HEK293 (cell line): ENCODE measurements at regions of chr16 and their contacts with region 1.

Region 1: DNA sequence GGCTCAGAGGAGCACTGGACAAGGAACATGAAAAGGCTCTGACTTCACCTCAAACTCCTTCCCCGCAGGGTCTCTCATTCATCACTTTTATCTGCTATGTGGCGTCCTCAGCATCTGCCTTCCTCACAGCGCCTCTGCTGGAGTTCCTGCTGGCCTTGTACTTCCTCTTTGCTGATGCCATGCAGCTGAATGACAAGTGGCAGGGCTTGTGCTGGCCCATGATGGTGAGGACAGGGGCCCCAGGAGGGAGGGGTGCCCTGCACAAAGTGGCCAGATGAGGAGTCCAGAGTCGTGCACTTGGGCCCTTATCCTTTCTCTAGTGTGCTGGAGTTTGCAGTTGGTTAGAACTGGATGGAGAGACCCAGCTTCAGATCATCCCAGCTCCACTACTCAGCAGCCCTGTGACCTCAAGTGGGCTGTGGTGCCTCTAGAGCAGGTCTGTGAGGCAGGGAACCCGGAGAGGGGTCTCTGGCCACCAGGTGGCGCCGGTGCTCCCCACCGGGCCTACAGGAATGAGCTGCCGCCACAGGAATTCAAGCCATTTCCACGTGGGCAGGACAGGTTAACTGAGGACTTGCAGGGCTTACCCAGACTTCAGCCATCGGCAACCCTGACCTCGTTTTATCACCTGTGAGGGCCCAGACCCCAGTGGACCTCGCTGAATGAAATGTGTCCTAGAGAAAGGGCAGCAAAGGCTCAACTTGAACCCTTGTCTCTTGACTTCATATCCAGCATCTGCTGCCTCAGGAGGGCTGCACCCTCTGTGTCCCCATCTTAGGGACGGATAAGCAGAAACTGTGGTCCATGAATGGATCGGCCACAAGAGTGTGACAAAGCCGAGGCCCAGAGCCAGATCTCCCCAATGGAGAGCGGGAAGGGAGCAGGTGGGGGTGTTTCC is 4.0 kb downstream of the CMTM3 start:
- H3K4me3 ChIP-seq: no peak overlapping the region
- H3K27ac ChIP-seq: no peak overlapping the region
- H3K4me1 ChIP-seq: no peaks in the 10 kb centered on the region
- CTCF ChIP-seq: peak; percentile 93

Region 2: GRCh38 chr16:66416939-66417700 is 191.4 kb before region 1 on chr16:
- CTCF ChIA-PET with region 1: no interaction called
- POLR2A ChIA-PET with region 1: no interaction called
- H3K4me3 ChIP-seq: no peak overlapping the region
- H3K27ac ChIP-seq: no peak overlapping the region
- H3K4me1 ChIP-seq: no peaks in the 10 kb centered on the region
- CTCF ChIP-seq: no peak

Region 3: GRCh38 chr16:66562407-66562806 is 46.1 kb before region 1 on chr16:
- CTCF ChIA-PET with region 1: interaction called, 10 read pairs
- POLR2A ChIA-PET with region 1: no interaction called
- H3K4me3 ChIP-seq: no peak overlapping the region
- H3K27ac ChIP-seq: no peak overlapping the region
- H3K4me1 ChIP-seq: no peaks in the 10 kb centered on the region
- CTCF ChIP-seq: no peak

Region 4: GRCh38 chr16:66587881-66588600 is 20.4 kb before region 1 on chr16:
- CTCF ChIA-PET with region 1: no interaction called
- POLR2A ChIA-PET with region 1: no interaction called
- H3K4me3 ChIP-seq: no peak overlapping the region
- H3K27ac ChIP-seq: no peak overlapping the region
- H3K4me1 ChIP-seq: no peaks in the 10 kb centered on the region
- CTCF ChIP-seq: no peak

Region 5: GRCh38 chr16:66618588-66619375 is 10.3 kb after region 1 on chr16:
- CTCF ChIA-PET with region 1: interaction called, 28 read pairs
- POLR2A ChIA-PET with region 1: interaction called, 4 read pairs
- H3K4me3 ChIP-seq: no peak overlapping the region
- H3K27ac ChIP-seq: no peak overlapping the region
- H3K4me1 ChIP-seq: peaks cover 13% of the 10 kb centered on the region
- CTCF ChIP-seq: no peak

Region 6: GRCh38 chr16:66810391-66810790 is 201.9 kb after region 1 on chr16:
- CTCF ChIA-PET with region 1: no interaction called
- POLR2A ChIA-PET with region 1: no interaction called
- H3K4me3 ChIP-seq: no peak overlapping the region
- H3K27ac ChIP-seq: no peak overlapping the region
- H3K4me1 ChIP-seq: no peaks in the 10 kb centered on the region
- CTCF ChIP-seq: no peak